Psoas muscle (tissue), 8 donors: ENCODE measurements at regions of chr6 and their contacts with region 1.

Region 1: DNA sequence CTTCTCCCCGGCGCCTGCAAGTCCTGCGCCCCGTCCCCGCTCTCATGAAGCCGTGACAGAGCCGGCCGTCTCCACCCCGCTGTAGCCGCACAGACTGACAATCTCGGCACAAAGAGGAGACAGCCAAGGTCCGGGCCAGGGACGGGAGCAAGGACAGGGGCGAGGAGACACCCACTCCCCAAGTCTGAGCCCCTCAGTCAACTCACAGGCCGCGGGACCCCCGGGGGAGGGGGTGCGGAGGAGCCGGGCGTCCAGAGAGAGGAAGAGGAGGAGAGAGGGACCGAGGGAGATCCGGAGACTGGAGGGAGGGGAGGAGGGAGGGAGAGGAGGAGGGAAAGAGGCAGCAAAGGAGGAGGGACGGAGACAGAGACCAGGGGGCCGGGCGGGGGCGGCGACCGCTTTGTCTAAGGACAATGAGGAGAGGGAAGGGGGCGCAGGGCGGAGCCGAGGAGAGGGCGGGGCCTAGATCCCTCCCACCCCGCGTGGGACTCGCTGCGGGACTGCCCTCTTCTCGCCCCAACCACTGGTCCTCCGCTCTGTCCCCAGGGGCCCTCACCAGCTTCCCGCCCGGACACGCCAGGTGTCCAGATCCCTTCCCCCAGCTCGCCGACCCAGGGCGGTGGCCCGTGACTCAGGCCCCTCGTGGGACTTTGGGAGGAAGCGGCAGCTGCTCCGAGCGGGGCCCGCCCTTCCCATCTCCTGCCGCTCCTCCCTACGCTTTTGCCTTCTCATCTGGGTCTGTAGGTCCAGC is 638 bp upstream of the PPP1R18 start:
- DNase-seq: peak; percentile 97 to 99
- ATAC-seq: peak; percentile 77 to 82 (median 80)
- H3K4me3 ChIP-seq: peak overlapping the region; percentile 85
- H3K27ac ChIP-seq: peak overlapping the region; percentile 91
- H3K4me1 ChIP-seq: peaks cover 35% of the 10 kb centered on the region
- H3K27me3 ChIP-seq: no peaks in the 10 kb centered on the region
- CTCF ChIP-seq: no peak

Region 2: DNA sequence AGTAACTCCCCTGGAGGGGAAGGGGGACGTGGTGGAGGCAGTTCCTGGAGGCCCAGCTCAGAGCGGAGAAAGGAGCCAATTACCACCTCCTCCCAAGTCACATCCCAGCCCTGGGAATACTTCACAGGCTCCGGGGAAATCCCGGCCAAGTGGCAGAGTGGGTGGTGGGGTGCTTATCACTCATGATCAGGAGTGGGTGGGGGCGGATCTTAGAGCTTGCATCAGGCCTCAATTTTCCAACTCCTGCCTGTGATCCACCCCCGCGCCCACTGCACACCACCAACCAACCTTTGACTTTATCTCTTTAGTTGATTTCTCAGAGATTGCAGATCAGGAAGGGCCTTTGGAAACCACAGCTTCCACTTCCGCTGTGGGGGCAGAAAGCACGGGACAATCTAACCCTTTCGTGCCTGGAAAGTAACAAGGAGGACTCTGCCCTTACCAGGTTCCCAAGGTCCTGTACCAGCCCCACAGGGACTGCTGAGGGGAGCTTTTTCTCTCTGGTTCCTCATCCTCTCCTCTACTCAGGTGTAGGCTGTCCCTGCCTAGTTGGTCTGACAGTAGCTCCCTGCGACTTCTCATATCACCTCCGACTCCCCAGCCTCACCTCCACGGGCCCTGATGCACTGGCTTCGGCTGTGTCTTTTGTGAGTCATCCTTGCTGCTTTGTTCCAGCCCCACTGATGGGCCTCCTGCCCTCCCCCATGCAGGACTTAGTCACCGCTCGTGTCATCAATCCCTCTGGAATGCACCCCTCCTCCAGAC is 82.2 kb after region 1 on chr6:
- intact Hi-C with region 1: no loop called
- DNase-seq: peak; percentile 77 to 78
- ATAC-seq: peak; percentile 94 to 97 (median 96)
- H3K4me3 ChIP-seq: no peak overlapping the region
- H3K27ac ChIP-seq: peak overlapping the region; percentile 46
- H3K4me1 ChIP-seq: peaks cover 16% of the 10 kb centered on the region
- H3K27me3 ChIP-seq: no peaks in the 10 kb centered on the region
- CTCF ChIP-seq: no peak

Region 3: DNA sequence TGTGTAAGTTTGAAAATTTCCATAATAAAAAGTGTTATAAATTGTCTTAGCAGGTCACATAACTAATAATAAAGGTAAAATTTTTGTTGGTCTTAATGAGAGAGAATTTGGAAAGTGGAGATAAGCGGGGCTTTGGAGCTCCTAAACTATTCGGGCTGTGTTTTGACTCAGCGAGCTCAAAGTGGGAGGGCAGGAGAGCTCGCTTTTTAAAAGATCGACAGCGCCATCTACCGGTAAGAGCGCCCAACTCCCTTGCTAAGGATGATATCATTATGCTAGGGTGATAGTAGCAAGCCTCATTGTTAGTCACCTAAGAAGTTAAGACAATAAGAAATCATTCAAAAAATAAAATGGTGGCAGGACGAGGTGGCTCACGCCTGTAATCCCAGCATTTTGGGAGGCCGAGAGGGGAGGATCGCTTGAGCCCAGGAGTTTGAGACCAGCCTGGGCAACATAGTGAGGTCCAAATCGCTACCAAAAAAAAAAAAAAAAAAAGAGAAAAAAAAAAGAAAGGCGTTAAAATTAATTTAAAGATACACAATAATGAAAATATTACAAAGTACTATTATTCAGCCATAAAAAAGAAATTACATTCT is 400.5 kb after region 1 on chr6:
- intact Hi-C with region 1: loop called in 1 of 2 experiments (anchors 10 kb)
- DNase-seq: peak; percentile 81 to 85
- ATAC-seq: peak; percentile 89 to 97 (median 94)
- H3K4me3 ChIP-seq: no peak overlapping the region
- H3K27ac ChIP-seq: peak overlapping the region; percentile 31
- H3K4me1 ChIP-seq: peaks cover 17% of the 10 kb centered on the region
- H3K27me3 ChIP-seq: no peaks in the 10 kb centered on the region
- CTCF ChIP-seq: peak; percentile 86